ENCODE measurements at regions of chr11 and their contacts with region 1.

Region 1: GRCh38 chr11:120235024-120235861 is 4.7 kb upstream of the POU2F3 start:
- DNase-seq: peak; percentile 43
- ATAC-seq: peak; percentile 78
- H3K4me3 ChIP-seq: no peak overlapping the region
- H3K27ac ChIP-seq: no peak overlapping the region
- H3K4me1 ChIP-seq: no peaks in the 10 kb centered on the region
- H3K27me3 ChIP-seq: peaks cover 51% of the 10 kb centered on the region
- CTCF ChIP-seq: peak; percentile 66
- POLR2A ChIP-seq: no peak
- RAD21 ChIP-seq: peak; percentile 77

Region 2: GRCh38 chr11:120303004-120303637 is 67.9 kb after region 1 on chr11:
- CTCF ChIA-PET with region 1: interaction called, 5 read pairs
- POLR2A ChIA-PET with region 1: no interaction called
- dilution Hi-C with region 1: no loop called
- in situ Hi-C with region 1: loop called (anchors 5 kb)
- intact Hi-C with region 1: loop called (anchors 1 kb)
- DNase-seq: peak; percentile 80
- ATAC-seq: peak; percentile 74
- H3K4me3 ChIP-seq: no peak overlapping the region
- H3K27ac ChIP-seq: no peak overlapping the region
- H3K4me1 ChIP-seq: peaks cover 6% of the 10 kb centered on the region; the same call in 1 of the 2 replicates
- H3K27me3 ChIP-seq: peaks cover 16% of the 10 kb centered on the region
- CTCF ChIP-seq: peak; percentile 99
- POLR2A ChIP-seq: no peak
- RAD21 ChIP-seq: peak; percentile 75

Region 3: GRCh38 chr11:120457996-120458395 is 222.8 kb after region 1 on chr11:
- CTCF ChIA-PET with region 1: no interaction called
- POLR2A ChIA-PET with region 1: no interaction called
- dilution Hi-C with region 1: no loop called
- in situ Hi-C with region 1: no loop called
- intact Hi-C with region 1: no loop called
- DNase-seq: no peak
- ATAC-seq: no peak
- H3K4me3 ChIP-seq: no peak overlapping the region
- H3K27ac ChIP-seq: no peak overlapping the region
- H3K4me1 ChIP-seq: no peaks in the 10 kb centered on the region; the same call in 1 of the 2 replicates
- H3K27me3 ChIP-seq: no peaks in the 10 kb centered on the region
- CTCF ChIP-seq: no peak
- POLR2A ChIP-seq: no peak
- RAD21 ChIP-seq: no peak

Region 4: DNA sequence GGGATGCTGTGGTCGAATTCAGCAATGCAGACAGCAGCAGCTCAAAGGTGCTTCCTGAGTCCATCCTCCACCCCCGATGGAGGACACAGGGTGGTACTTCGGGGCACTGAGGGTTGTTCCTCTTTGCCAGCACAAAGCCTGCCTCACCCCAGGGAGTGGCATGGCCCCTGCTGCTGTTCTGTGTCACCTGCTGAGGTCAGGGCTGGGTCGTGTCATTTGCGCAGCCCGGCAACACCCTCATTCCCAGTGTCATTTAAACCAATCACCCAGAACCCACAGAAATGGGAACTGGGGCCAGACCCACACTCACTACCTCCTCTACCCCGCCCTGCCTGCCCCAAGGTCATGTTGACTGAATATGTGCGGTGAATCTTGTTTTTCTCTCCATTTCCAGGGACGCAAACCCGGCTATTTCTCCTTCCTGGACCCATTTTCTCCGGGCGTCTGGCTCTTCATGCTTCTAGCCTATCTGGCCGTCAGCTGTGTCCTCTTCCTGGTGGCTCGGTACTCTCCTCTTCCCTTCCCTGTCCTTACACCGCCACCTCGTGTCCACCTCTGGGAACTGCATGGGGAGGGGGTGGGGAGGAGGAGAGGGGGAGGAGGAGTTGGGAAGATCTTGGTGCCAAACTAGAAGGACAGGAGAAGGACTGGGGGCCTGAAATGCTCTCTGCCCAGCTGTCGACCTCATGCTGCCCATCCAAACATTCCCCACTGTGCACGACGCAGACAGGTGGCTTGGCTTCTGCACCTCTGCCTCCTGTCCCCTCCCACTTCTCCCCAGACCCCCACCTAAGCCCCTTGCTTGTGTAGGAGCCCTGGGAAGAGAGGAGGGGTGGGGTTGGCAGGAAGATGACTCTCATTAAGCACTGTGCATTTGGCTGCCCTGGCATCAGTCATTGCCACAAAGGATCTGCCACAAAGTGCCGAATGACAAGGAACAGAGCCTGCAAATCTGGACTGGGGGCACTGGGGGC is 717.5 kb after region 1 on chr11:
- CTCF ChIA-PET with region 1: no interaction called
- POLR2A ChIA-PET with region 1: no interaction called
- dilution Hi-C with region 1: no loop called
- in situ Hi-C with region 1: no loop called
- intact Hi-C with region 1: loop called (anchors 2 kb)
- DNase-seq: peak; percentile 64
- ATAC-seq: peak; percentile 100
- H3K4me3 ChIP-seq: no peak overlapping the region
- H3K27ac ChIP-seq: no peak overlapping the region
- H3K4me1 ChIP-seq: no peaks in the 10 kb centered on the region
- H3K27me3 ChIP-seq: peaks cover 8% of the 10 kb centered on the region
- CTCF ChIP-seq: peak; percentile 74
- POLR2A ChIP-seq: no peak
- RAD21 ChIP-seq: peak; percentile 81